A549 (cell line): ENCODE measurements at regions of chr11 and their contacts with region 1.

Region 1: DNA sequence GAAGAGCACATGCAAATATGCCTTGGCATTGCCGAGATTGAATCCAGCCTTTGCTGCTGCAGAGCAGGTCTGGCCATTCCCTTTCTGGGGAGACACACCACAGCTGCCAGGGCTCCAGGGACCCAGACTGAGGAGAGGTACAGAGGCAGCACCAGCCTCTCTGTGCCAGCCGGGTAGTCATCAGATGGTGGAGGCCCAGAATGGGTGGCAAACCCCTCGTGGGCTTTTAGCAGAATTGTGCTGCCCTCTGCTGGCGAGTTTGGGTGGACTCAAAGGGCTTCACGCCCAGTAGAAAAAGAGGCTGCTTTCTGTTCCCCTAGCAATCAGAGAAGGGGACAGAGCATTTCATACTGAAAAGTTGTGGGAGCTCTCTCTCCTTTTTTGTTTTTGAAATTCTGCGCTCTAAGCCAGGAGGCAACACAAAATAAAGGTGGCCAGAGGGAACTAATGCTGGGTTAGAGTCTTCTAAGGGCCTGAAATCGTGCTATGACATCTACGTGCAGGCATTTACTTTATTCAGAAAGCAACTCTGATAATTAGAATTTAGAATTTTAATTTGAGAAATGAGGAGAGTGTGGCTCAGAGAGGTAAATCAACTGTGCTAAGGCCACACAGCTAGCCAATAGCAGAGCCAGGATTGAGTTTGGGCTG is 158.8 kb upstream of the NAV2 start:
- DNase-seq: peak; percentile 57 to 67
- ATAC-seq: peak; percentile 70 to 90
- H3K4me3 ChIP-seq: no peak overlapping the region
- H3K27ac ChIP-seq: no peak overlapping the region
- H3K4me1 ChIP-seq: no peaks in the 10 kb centered on the region
- CTCF ChIP-seq: peak; percentile 92
- EP300 ChIP-seq: no peak
- POLR2A ChIP-seq: no peak
- RAD21 ChIP-seq: peak; percentile 98

Region 2: GRCh38 chr11:19071255-19071654 is 482.6 kb before region 1 on chr11:
- CTCF ChIA-PET with region 1: interaction called, 218 read pairs
- POLR2A ChIA-PET with region 1: no interaction called
- DNase-seq: peak; percentile 77 to 90
- ATAC-seq: peak; percentile 94 to 98
- H3K4me3 ChIP-seq: 0 out of 3 replicates have a peak overlapping the region, but pooled peaks have one; percentile 18
- H3K27ac ChIP-seq: no peak overlapping the region
- H3K4me1 ChIP-seq: no peaks in the 10 kb centered on the region
- CTCF ChIP-seq: peak; percentile 99
- EP300 ChIP-seq: no peak
- POLR2A ChIP-seq: no peak
- RAD21 ChIP-seq: peak; percentile 93 to 95

Region 3: GRCh38 chr11:19259487-19260345 is 294.1 kb before region 1 on chr11:
- CTCF ChIA-PET with region 1: interaction called, 104 read pairs
- POLR2A ChIA-PET with region 1: no interaction called
- DNase-seq: peak; percentile 40 to 62
- ATAC-seq: peak; percentile 73 to 92; a peak in 5 of 6 replicates
- H3K4me3 ChIP-seq: no peak overlapping the region
- H3K27ac ChIP-seq: no peak overlapping the region
- H3K4me1 ChIP-seq: no peaks in the 10 kb centered on the region
- CTCF ChIP-seq: peak; percentile 89
- EP300 ChIP-seq: no peak
- POLR2A ChIP-seq: no peak
- RAD21 ChIP-seq: peak; percentile 83

Region 4: DNA sequence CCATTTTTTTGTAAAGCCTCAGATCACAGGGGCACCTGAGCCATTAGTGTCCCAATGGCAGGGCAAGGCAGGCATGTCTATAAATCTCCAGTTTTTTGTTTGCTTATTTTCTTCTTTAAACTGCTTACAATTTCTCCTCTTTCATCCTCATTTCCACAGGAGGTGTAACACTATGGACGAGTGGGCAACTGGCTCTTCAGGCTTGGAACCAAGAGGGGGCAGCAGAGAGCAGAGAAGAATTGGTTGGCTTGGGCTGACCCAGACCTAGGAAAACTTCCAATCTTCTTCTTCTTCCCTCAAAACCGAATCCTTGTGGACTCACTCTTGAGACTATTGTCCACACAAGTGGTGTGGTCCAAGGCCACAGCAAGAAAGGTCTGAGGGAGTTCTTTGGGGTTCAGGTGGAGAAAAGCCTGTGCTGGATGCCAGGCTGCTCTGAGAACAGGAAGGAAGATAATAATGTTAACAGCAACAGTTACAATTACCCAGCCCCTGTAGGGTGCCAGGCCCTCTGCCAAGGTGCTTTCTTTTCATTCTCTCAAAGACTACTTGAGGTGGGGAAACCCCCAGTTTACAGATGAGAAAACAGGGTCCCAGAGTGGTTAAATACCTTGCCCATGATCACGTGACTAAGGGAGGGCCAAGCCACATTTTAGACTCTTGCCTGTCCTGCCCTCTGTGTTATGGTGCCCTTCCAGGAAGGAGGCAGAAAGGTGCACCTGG is 242.3 kb before region 1 on chr11:
- CTCF ChIA-PET with region 1: interaction called, 18 read pairs
- POLR2A ChIA-PET with region 1: no interaction called
- DNase-seq: peak; percentile 51 to 55
- ATAC-seq: peak; percentile 87 to 97
- H3K4me3 ChIP-seq: no peak overlapping the region
- H3K27ac ChIP-seq: no peak overlapping the region
- H3K4me1 ChIP-seq: no peaks in the 10 kb centered on the region
- CTCF ChIP-seq: peak; percentile 67
- EP300 ChIP-seq: no peak
- POLR2A ChIP-seq: no peak
- RAD21 ChIP-seq: peak; percentile 72 to 78

Region 5: GRCh38 chr11:19336331-19336730 is 217.5 kb before region 1 on chr11:
- CTCF ChIA-PET with region 1: interaction called, 10 read pairs
- POLR2A ChIA-PET with region 1: no interaction called
- DNase-seq: no peak
- ATAC-seq: no peak
- H3K4me3 ChIP-seq: no peak overlapping the region
- H3K27ac ChIP-seq: no peak overlapping the region
- H3K4me1 ChIP-seq: no peaks in the 10 kb centered on the region
- CTCF ChIP-seq: no peak
- EP300 ChIP-seq: no peak
- POLR2A ChIP-seq: no peak
- RAD21 ChIP-seq: no peak

Region 6: GRCh38 chr11:19607652-19608360 is 54.0 kb after region 1 on chr11:
- CTCF ChIA-PET with region 1: no interaction called
- POLR2A ChIA-PET with region 1: no interaction called
- DNase-seq: no peak
- ATAC-seq: no peak
- H3K4me3 ChIP-seq: no peak overlapping the region
- H3K27ac ChIP-seq: no peak overlapping the region; a peak in 1 of 6 replicates
- H3K4me1 ChIP-seq: no peaks in the 10 kb centered on the region
- CTCF ChIP-seq: no peak
- EP300 ChIP-seq: no peak
- POLR2A ChIP-seq: no peak
- RAD21 ChIP-seq: no peak

Region 7: GRCh38 chr11:19651653-19652052 is 97.8 kb after region 1 on chr11:
- CTCF ChIA-PET with region 1: no interaction called
- POLR2A ChIA-PET with region 1: no interaction called
- DNase-seq: no peak
- ATAC-seq: no peak
- H3K4me3 ChIP-seq: no peak overlapping the region
- H3K27ac ChIP-seq: no peak overlapping the region
- H3K4me1 ChIP-seq: no peaks in the 10 kb centered on the region
- CTCF ChIP-seq: no peak
- EP300 ChIP-seq: no peak
- POLR2A ChIP-seq: no peak
- RAD21 ChIP-seq: no peak

Region 8: GRCh38 chr11:19742588-19743292 is 188.9 kb after region 1 on chr11:
- CTCF ChIA-PET with region 1: interaction called, 296 read pairs
- POLR2A ChIA-PET with region 1: no interaction called
- DNase-seq: peak; percentile 45 to 80
- ATAC-seq: peak; percentile 84 to 97
- H3K4me3 ChIP-seq: no peak overlapping the region
- H3K27ac ChIP-seq: 0 out of 6 replicates have a peak overlapping the region, but pooled peaks of 1 of the 2 experiments have one; percentile 15
- H3K4me1 ChIP-seq: 0 out of 3 replicates have a peak, but pooled peaks cover 8% of the 10 kb centered on the region
- CTCF ChIP-seq: peak; percentile 87
- EP300 ChIP-seq: no peak
- POLR2A ChIP-seq: no peak
- RAD21 ChIP-seq: peak; percentile 96